ENCODE measurements at regions of chr17 and their contacts with region 1.

Region 1: GRCh38 chr17:79087428-79088143 is 13.0 kb downstream of the ENGASE start:
- DNase-seq: peak; percentile 85
- CTCF ChIP-seq: peak; percentile 86

Region 2: DNA sequence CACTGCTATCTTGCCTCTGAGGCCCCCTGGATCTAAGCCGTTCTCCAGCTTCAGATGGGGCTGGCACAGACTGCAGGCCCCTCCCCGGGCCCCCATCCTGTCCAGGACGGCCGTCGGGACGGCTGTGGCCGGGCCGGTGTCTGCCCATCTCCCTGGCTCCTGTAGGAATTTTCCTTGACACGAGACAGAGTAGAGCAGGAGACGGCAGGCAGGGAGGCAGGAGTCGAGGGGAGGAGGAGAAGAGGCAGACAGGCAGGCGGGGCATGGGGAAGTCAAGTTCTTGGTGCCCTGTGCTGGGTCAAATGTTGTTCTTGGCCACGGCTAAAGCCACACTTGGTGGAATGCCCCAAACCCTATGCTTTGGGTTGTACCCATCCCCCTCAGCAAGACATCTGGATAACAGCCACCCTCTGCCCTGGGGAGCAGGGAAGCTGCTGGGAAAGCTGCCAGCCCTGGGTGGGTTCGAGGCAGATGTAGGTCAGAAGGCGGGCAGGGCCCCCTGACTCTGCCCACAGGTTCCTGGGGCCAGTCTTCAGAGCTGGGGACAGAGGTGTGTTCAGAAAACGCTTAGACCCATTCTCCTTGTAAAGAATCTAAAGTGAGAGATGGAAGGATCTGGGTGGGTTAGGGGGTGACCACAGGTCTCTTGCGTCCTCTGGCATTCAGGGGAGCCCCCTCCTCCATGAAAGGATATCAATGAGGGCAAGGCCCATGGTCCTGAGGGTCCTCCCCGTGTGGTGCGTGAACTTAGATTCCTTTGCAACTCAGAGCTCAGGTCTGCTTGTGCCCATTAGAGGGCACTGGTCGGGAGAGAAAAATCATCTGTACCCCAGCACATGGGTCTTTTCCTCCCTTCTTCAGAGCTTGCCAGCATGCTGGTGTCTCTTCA is 59.4 kb before region 1 on chr17:
- CTCF ChIA-PET with region 1: no interaction called
- POLR2A ChIA-PET with region 1: no interaction called
- DNase-seq: no peak
- CTCF ChIP-seq: no peak

Region 3: DNA sequence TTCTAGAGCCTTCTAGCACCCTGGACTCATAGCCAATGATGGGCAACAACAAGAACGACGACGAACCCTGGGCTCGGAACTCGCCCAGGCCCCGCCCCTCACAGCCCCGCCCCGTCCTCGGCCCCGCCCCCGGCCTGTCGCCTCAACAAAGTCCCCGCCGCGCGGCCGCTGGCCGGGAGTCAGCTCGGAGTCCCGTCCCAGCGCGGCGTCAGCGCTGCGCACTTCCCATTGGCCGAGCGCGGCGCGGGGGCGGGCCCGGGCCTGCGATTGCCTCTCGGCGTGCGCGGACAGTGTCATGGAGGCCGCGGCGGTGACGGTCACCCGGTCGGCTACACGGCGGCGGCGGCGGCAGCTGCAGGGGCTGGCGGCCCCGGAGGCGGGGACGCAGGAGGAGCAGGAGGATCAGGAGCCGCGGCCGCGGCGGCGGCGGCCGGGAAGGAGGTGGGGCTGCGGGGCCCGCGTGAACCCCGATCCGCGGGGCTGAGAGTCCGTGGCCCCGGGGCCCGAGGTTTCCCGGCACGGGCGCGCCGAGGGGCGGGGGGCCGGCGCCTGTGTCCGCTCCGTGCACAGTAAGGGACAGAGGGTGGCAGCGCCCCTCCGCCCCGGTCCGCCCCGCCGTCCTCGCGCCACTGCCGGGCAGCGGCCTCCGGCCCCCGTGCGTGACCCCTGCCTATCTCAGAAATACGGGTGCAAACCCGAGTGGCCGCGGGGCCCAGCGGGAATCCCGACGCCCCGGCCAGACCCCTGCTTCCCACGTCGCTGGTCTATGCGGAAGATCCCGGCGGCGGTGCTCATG is 12.7 kb before region 1 on chr17 and contains the start of gene ENGASE:
- CTCF ChIA-PET with region 1: interaction called, 15 read pairs
- POLR2A ChIA-PET with region 1: interaction called, 5 read pairs
- DNase-seq: peak; percentile 99
- CTCF ChIP-seq: no peak

Region 4: DNA sequence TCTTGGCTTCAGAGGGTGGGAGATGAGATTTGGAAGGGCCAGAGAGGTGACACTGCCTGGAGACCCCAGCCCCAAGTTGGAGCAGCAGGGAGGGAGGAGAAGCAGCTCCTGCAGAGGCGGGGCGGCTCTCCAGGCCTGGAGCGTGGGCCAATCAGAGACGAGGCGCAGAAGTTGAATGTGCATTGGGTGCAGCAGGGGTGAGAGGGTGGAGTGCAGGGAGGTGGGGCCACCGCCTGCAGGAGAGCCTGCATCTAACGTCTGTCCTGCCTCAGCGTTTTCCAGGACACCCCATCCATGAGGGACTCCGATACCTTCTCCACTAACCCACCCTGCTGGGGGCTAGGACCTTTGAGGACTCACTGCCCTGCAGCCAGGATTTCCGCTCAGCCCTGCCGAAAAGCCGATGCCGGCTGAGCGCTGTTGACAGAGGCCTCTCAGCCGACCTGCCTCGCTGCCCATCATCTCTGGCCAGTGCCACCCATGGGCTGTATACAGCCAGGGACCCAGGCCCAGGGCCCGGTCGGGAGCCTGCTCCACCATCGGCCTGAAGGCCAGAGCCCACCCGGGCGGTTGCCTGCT is 133.2 kb after region 1 on chr17:
- CTCF ChIA-PET with region 1: no interaction called
- POLR2A ChIA-PET with region 1: no interaction called
- DNase-seq: no peak
- CTCF ChIP-seq: no peak

Region 5: DNA sequence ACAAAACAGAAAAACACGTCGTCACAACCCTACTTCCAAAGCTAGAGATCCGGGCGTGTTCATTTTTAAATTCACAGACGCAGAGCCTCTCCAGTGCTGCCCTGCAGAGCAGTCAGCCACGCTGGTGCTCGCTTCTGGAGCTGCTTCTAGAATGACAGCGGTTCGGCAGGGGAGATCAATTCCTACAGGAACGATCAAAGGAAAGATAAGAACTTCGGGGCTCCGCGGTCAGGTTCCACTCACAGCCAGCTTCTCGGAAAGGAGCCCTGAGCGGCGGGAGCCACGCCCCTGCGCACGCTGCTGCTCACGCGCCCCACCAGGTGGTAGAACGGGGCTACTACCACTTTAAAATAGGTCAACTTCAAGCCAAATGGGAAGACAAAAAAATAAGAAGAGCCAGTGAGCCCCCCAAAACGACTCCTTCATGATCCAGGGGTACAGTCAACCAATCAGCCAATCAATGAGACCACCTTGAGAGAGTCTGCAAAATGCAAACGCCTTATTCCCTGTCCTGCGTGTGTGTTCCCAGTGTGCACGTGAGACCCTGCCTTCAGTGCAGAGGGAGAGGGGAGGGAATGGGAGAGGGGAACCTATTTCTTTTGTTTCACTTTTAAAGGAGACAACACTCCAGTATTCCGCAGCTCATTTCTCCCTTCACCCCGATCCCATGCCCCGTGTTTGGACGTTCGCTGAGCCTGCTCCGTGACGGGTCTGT is 313.6 kb after region 1 on chr17:
- CTCF ChIA-PET with region 1: interaction called, 20 read pairs
- POLR2A ChIA-PET with region 1: no interaction called
- DNase-seq: peak; percentile 89
- CTCF ChIP-seq: peak; percentile 89

Measured in GM10248 (cell line).